Natural killer cell (primary cell): ENCODE measurements at regions of chr16 and their contacts with region 1.

Region 1: GRCh38 chr16:2340564-2341455 is at the start of gene ABCA3:
- DNase-seq: peak; percentile 97 to 98
- ATAC-seq: peak; percentile 88 to 97 (median 90)
- H3K4me3 ChIP-seq: peak within 1 kb of the TSS; percentile 49
- H3K4me3 Mint-ChIP-seq: peak within 1 kb of the TSS; percentile 92
- H3K27ac ChIP-seq: no peak within 1 kb of the TSS
- H3K27ac Mint-ChIP-seq: peak within 1 kb of the TSS; percentile 56 to 82
- H3K4me1 ChIP-seq: peaks cover 19% of the 10 kb centered on the region
- H3K4me1 Mint-ChIP-seq: peaks cover 13 to 20% of the 10 kb centered on the region in 2 donors
- H3K27me3 ChIP-seq: no peaks in the 10 kb centered on the region
- H3K27me3 Mint-ChIP-seq: peaks cover 0 to under 1% of the 10 kb centered on the region in 2 donors
- CTCF ChIP-seq: peak; percentile 100
- total RNA-seq, gene ABCA3: 12.2 to 17.5 (median 16.6) TPM

Region 2: GRCh38 chr16:2422123-2422867 is 81.5 kb after region 1 on chr16:
- intact Hi-C with region 1: loop called (anchors 2 kb)
- DNase-seq: peak; percentile 39 to 56
- ATAC-seq: peak; percentile 85 to 96 (median 87)
- H3K4me3 ChIP-seq: no peak overlapping the region
- H3K4me3 Mint-ChIP-seq: no peak overlapping the region
- H3K27ac ChIP-seq: no peak overlapping the region
- H3K27ac Mint-ChIP-seq: peak overlapping the region in 1 of 2 donors; percentile 53
- H3K4me1 ChIP-seq: peaks cover 18% of the 10 kb centered on the region
- H3K4me1 Mint-ChIP-seq: peaks cover 0 to 12% of the 10 kb centered on the region in 2 donors
- H3K27me3 ChIP-seq: no peaks in the 10 kb centered on the region
- H3K27me3 Mint-ChIP-seq: no peaks in the 10 kb centered on the region
- CTCF ChIP-seq: no peak

Region 3: DNA sequence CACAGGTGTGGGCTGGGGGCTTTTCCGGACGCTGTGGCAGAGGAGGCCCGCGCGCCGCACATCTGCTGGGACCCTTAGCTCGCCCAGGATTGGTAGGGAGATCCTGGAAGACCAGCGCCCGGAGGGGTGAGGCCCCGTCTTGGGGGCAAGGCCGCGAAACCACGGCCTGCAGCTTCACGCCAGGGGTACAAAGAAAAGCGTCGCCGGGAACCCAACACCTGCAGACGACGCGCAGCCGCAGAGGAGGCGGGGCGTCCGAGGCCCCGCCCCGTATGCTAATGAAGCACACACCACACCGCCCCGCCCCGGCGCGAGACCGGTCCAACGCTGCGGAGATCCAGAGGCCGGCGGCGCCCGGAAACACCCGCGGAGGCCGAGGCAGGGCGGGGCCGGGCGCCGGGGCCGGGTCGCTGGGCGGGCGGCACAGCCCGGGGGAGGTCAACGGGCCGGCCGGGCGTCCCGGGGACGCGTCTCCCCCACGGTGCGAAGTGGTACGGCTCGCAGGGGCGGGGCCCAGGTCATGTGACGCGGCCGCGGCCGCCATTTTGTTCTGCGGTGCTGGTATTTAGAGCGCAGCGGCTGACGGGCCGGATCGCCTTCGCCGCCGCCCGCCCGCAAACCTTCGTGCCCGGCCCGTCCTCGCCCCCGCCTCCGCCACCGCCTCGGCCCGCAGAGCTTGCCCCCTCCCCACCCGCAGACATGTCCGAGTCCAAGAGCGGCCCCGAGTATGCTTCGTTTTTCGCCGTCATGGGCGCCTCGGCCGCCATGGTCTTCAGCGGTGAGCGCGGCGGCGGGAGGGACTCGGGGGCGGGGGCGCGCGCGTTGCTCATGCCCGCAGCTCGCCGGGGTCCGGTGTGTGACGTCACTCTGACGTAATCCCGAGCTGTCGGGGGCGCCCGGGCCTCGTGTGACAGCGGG is 172.9 kb after region 1 on chr16 and contains the start of gene ATP6V0C:
- intact Hi-C with region 1: loop called (anchors 5 kb)
- DNase-seq: peak; percentile 94 to 97
- ATAC-seq: peak; percentile 80 to 92 (median 85)
- H3K4me3 ChIP-seq: peak within 1 kb of the TSS; percentile 73
- H3K4me3 Mint-ChIP-seq: peak within 1 kb of the TSS; percentile 92
- H3K27ac ChIP-seq: peak within 1 kb of the TSS; percentile 91
- H3K27ac Mint-ChIP-seq: peak within 1 kb of the TSS; percentile 89 to 91
- H3K4me1 ChIP-seq: peaks cover 74% of the 10 kb centered on the region
- H3K4me1 Mint-ChIP-seq: peaks cover 54 to 71% of the 10 kb centered on the region in 2 donors
- H3K27me3 ChIP-seq: no peaks in the 10 kb centered on the region
- H3K27me3 Mint-ChIP-seq: peaks cover 0 to 4% of the 10 kb centered on the region in 2 donors
- CTCF ChIP-seq: no peak
- total RNA-seq, gene ATP6V0C: 183 to 242 (median 217) TPM

Region 4: GRCh38 chr16:3021449-3022207 is 680.8 kb after region 1 on chr16:
- intact Hi-C with region 1: no loop called
- DNase-seq: peak; percentile 70 to 82
- ATAC-seq: peak; percentile 32 to 56 (median 35)
- H3K4me3 ChIP-seq: peak overlapping the region; percentile 52
- H3K4me3 Mint-ChIP-seq: peak overlapping the region; percentile 94
- H3K27ac ChIP-seq: peak overlapping the region; percentile 1
- H3K27ac Mint-ChIP-seq: peak overlapping the region; percentile 91 to 92
- H3K4me1 ChIP-seq: peaks cover 66% of the 10 kb centered on the region
- H3K4me1 Mint-ChIP-seq: peaks cover 35 to 54% of the 10 kb centered on the region in 2 donors
- H3K27me3 ChIP-seq: peaks cover 6% of the 10 kb centered on the region
- H3K27me3 Mint-ChIP-seq: no peaks in the 10 kb centered on the region
- CTCF ChIP-seq: peak; percentile 11